ENCODE measurements at regions of chr12 and their contacts with region 1.

Region 1: GRCh38 chr12:114508529-114509129 is 102.7 kb upstream of the TBX5 start:
- DNase-seq: no peak
- ATAC-seq: peak; percentile 90
- H3K4me3 ChIP-seq: no peak overlapping the region
- H3K27ac ChIP-seq: no peak overlapping the region
- H3K4me1 ChIP-seq: no peaks in the 10 kb centered on the region
- H3K27me3 ChIP-seq: peaks cover 8% of the 10 kb centered on the region
- CTCF ChIP-seq: peak; percentile 84

Region 2: GRCh38 chr12:113422030-113422885 is 1086.4 kb before region 1 on chr12 and contains the start of gene SDSL:
- intact Hi-C with region 1: no loop called
- DNase-seq: peak; percentile 88
- ATAC-seq: peak; percentile 94
- H3K4me3 ChIP-seq: peak within 1 kb of the TSS; percentile 59
- H3K27ac ChIP-seq: peak within 1 kb of the TSS; percentile 77
- H3K4me1 ChIP-seq: peaks cover 28% of the 10 kb centered on the region
- H3K27me3 ChIP-seq: no peaks in the 10 kb centered on the region
- CTCF ChIP-seq: no peak
- total RNA-seq, gene SDSL: 10.7 TPM

Region 3: DNA sequence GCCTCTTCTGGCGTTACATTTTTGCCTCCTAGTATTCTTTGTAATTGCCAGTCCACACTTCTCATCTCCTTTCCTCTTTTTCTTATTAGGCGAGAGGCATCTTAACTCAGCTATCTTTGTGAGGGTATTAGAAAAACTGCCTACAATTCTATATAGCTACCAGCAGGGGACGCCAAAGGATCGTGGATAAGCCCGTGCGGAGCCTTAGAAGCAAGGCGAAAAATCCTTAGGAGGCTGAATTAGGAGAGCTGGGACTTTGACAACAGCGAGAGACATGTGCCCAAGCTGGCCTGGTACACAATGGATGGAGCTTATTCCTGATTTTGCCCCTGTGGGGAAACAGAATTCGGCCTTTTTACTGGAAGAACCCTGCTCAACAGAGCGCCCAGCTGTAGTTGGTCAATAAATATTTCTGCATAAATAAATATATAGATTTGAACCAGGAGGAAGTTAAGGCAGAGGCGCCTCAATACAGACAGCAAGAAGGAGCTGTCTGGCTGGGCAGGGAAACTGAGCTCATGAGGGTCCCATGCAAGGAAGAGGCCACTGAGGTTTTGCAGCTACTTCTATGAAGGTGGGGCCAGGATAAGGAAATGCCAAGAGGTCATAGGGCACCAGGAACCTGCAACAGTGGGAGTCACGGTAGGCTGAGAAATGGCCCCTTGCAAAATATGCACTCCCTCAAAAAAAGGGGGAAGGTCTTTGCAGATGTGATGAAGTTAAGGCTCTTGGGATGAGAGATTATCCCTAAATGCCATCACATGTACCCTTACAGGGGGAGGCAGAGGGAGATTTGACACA is 527.9 kb before region 1 on chr12:
- intact Hi-C with region 1: loop called (anchors 5 kb)
- DNase-seq: no peak
- ATAC-seq: peak; percentile 88
- H3K4me3 ChIP-seq: no peak overlapping the region
- H3K27ac ChIP-seq: no peak overlapping the region
- H3K4me1 ChIP-seq: no peaks in the 10 kb centered on the region
- H3K27me3 ChIP-seq: peaks cover 31% of the 10 kb centered on the region
- CTCF ChIP-seq: peak; percentile 90

Region 4: DNA sequence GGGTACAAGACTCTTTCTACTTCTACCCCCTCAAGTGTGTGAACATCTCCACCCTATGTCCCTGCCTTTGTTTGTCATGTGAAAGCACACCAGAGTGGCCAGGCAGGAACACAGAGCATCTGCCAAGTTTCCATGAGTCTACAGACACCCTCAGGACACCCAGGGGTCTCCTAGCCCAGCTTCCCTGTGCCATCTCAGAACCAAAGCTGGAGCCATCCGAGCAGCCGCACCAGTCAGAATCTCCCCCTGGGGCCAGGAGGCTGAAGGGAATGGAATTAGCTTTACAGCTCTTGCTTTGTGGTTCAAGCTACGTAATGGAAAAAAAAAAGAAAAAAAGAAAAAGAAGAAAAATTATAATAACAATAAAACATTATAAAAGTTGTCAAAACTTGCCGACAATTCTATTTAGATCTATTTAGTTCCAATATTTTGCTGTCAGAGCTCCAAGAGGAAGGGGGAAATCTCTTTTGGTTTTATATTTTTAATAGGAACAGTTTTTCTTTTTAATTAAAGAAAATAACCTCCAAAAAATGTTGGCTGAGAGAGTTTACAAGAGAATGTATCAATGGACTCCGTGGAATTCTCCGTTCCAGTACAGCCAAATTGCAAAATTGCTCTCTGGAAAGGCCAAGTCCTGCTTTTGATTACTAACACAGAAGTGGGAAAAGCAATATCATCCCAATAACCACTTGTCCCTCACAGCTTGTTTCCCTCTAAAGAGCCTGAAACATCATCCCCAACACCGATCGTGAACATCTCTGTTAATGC is 139.8 kb before region 1 on chr12:
- intact Hi-C with region 1: no loop called
- DNase-seq: no peak
- ATAC-seq: no peak
- H3K4me3 ChIP-seq: no peak overlapping the region
- H3K27ac ChIP-seq: peak overlapping the region; percentile 63
- H3K4me1 ChIP-seq: peaks cover 20% of the 10 kb centered on the region
- H3K27me3 ChIP-seq: no peaks in the 10 kb centered on the region
- CTCF ChIP-seq: no peak

Region 5: GRCh38 chr12:114457620-114458019 is 51.0 kb before region 1 on chr12:
- intact Hi-C with region 1: no loop called
- DNase-seq: no peak
- ATAC-seq: no peak
- H3K4me3 ChIP-seq: no peak overlapping the region
- H3K27ac ChIP-seq: no peak overlapping the region
- H3K4me1 ChIP-seq: no peaks in the 10 kb centered on the region
- H3K27me3 ChIP-seq: peaks cover 7% of the 10 kb centered on the region
- CTCF ChIP-seq: no peak

Region 6: DNA sequence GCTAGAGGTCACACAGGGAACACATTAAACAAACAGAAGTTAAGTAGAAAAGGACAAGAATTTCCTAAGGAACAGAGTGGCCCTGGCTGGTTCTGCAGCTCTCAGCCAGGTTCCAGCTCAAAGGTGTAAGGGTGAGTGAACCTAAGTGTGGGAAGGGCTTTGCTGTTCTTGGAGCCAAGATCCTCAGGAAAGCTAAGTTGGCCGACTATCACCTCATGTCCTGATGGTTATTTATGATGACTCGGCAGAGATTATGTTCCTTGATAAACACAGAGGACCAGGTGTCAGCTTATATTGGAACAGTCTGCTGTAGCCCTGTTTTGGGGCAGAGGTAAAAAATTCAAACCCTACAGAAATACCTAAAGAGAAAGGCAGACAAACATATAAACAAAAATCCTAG is 46.8 kb after region 1 on chr12:
- intact Hi-C with region 1: no loop called
- DNase-seq: no peak
- ATAC-seq: no peak
- H3K4me3 ChIP-seq: no peak overlapping the region
- H3K27ac ChIP-seq: no peak overlapping the region
- H3K4me1 ChIP-seq: no peaks in the 10 kb centered on the region
- H3K27me3 ChIP-seq: no peaks in the 10 kb centered on the region
- CTCF ChIP-seq: no peak